Heart right ventricle (tissue), 16 donors: ENCODE measurements at regions of chr5 and their contacts with region 1.

Region 1: GRCh38 chr5:59174248-59174844 is 591.5 kb downstream of the RAB3C start:
- DNase-seq: peak in 1 of 2 donors; percentile 32
- ATAC-seq: peak; percentile 63 to 86 (median 78)
- H3K4me3 ChIP-seq: no peak overlapping the region
- H3K27ac ChIP-seq: no peak overlapping the region
- H3K4me1 ChIP-seq: peaks cover 0 to 17% (median 0%) of the 10 kb centered on the region in 9 donors
- H3K27me3 ChIP-seq: no peaks in the 10 kb centered on the region
- CTCF ChIP-seq: peak; percentile 62 to 90 (median 85)

Region 2: GRCh38 chr5:59095480-59095879 is 78.9 kb before region 1 on chr5:
- intact Hi-C with region 1: no loop called
- DNase-seq: no peak
- ATAC-seq: peak in 1 of 8 donors; percentile 50
- H3K4me3 ChIP-seq: no peak overlapping the region
- H3K27ac ChIP-seq: peak overlapping the region in 1 of 10 donors; percentile 43
- H3K4me1 ChIP-seq: peaks cover 0 to 25% (median 0%) of the 10 kb centered on the region in 9 donors
- H3K27me3 ChIP-seq: no peaks in the 10 kb centered on the region
- CTCF ChIP-seq: no peak

Region 3: GRCh38 chr5:59126708-59127573 is 47.4 kb before region 1 on chr5:
- intact Hi-C with region 1: loop called in 1 of 10 experiments (anchors 5 kb)
- DNase-seq: no peak
- ATAC-seq: peak in 5 of 8 donors; percentile 2 to 13 (median 4)
- H3K4me3 ChIP-seq: peak overlapping the region in 9 of 10 donors; percentile 9 to 51 (median 42)
- H3K27ac ChIP-seq: peak overlapping the region; percentile 36 to 89 (median 84)
- H3K4me1 ChIP-seq: peaks cover 0 to 55% (median 36%) of the 10 kb centered on the region in 9 donors
- H3K27me3 ChIP-seq: no peaks in the 10 kb centered on the region
- CTCF ChIP-seq: no peak

Region 4: DNA sequence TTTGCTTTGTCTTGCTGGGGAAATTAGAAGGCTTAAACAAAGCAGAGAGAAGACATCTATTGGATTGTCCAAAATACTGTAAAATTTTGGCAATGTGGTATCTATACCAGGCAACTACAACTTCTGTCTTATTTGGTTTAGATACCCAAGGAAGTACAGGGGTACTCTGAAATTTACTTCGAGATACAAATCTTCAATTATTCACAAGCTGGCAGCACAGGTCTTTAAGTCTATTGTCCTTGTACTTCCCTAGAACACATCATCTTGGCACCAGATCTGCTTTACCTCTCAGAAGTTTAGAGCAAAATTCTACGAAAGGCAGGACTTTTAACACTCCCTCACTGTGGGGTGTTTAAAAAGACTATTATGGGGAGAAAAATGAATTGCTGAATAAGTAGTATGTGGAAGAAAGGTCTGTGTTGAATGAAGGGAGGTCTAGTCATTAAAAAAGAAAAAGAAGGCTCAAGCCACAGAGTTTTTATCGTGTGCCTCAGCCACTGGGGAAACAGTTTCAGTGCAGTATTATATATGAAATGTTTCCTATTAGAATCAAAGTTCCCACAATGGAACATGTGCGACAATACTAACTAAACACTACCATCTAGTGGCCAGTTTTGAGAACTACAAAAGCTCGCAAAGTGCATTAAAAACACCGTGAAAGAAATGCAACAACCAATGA is 625.5 kb after region 1 on chr5:
- intact Hi-C with region 1: no loop called
- DNase-seq: no peak
- ATAC-seq: peak in 7 of 8 donors; percentile 65 to 83 (median 75)
- H3K4me3 ChIP-seq: peak overlapping the region in 5 of 10 donors; percentile 2 to 30 (median 11)
- H3K27ac ChIP-seq: peak overlapping the region in 7 of 10 donors; percentile 1 to 43 (median 23)
- H3K4me1 ChIP-seq: peaks cover 0 to 28% (median 15%) of the 10 kb centered on the region in 9 donors
- H3K27me3 ChIP-seq: no peaks in the 10 kb centered on the region
- CTCF ChIP-seq: peak; percentile 57 to 86 (median 80)